CD8-positive, alpha-beta T cell (primary cell): ENCODE measurements at regions of chr3 and their contacts with region 1.

Region 1: GRCh38 chr3:71305231-71306206 is 278.0 kb downstream of the FOXP1 start:
- DNase-seq: peak in 4 of 9 experiments; percentile 19 to 48 (median 33)
- ATAC-seq: peak; percentile 29
- H3K4me3 ChIP-seq: peak overlapping the region; percentile 47 to 56
- H3K4me3 Mint-ChIP-seq: peak overlapping the region; percentile 89
- H3K27ac ChIP-seq: peak overlapping the region; percentile 57 to 80
- H3K27ac Mint-ChIP-seq: peak overlapping the region; percentile 96
- H3K4me1 ChIP-seq: peaks cover 71% of the 10 kb centered on the region
- H3K4me1 Mint-ChIP-seq: peaks cover 85% of the 10 kb centered on the region
- H3K27me3 ChIP-seq: no peaks in the 10 kb centered on the region
- H3K27me3 Mint-ChIP-seq: no peaks in the 10 kb centered on the region
- CTCF ChIP-seq: no peak

Region 2: GRCh38 chr3:70561796-70562195 is 743.7 kb before region 1 on chr3:
- CTCF ChIA-PET with region 1: no interaction called
- POLR2A ChIA-PET with region 1: no interaction called
- intact Hi-C with region 1: no loop called
- DNase-seq: no peak
- ATAC-seq: no peak
- H3K4me3 ChIP-seq: no peak overlapping the region
- H3K4me3 Mint-ChIP-seq: no peak overlapping the region
- H3K27ac ChIP-seq: no peak overlapping the region
- H3K27ac Mint-ChIP-seq: no peak overlapping the region
- H3K4me1 ChIP-seq: no peaks in the 10 kb centered on the region
- H3K4me1 Mint-ChIP-seq: no peaks in the 10 kb centered on the region
- H3K27me3 ChIP-seq: no peaks in the 10 kb centered on the region
- H3K27me3 Mint-ChIP-seq: peaks cover 3% of the 10 kb centered on the region
- CTCF ChIP-seq: no peak

Region 3: GRCh38 chr3:71006810-71007785 is 298.4 kb before region 1 on chr3:
- CTCF ChIA-PET with region 1: no interaction called
- POLR2A ChIA-PET with region 1: no interaction called
- intact Hi-C with region 1: loop called (anchors 1 to 5 kb)
- DNase-seq: peak in 2 of 9 experiments; percentile 44 to 64
- ATAC-seq: no peak
- H3K4me3 ChIP-seq: no peak overlapping the region
- H3K4me3 Mint-ChIP-seq: no peak overlapping the region
- H3K27ac ChIP-seq: no peak overlapping the region
- H3K27ac Mint-ChIP-seq: peak overlapping the region; percentile 85
- H3K4me1 ChIP-seq: peaks cover 54% of the 10 kb centered on the region
- H3K4me1 Mint-ChIP-seq: peaks cover 74% of the 10 kb centered on the region
- H3K27me3 ChIP-seq: no peaks in the 10 kb centered on the region
- H3K27me3 Mint-ChIP-seq: no peaks in the 10 kb centered on the region
- CTCF ChIP-seq: peak; percentile 30

Region 4: DNA sequence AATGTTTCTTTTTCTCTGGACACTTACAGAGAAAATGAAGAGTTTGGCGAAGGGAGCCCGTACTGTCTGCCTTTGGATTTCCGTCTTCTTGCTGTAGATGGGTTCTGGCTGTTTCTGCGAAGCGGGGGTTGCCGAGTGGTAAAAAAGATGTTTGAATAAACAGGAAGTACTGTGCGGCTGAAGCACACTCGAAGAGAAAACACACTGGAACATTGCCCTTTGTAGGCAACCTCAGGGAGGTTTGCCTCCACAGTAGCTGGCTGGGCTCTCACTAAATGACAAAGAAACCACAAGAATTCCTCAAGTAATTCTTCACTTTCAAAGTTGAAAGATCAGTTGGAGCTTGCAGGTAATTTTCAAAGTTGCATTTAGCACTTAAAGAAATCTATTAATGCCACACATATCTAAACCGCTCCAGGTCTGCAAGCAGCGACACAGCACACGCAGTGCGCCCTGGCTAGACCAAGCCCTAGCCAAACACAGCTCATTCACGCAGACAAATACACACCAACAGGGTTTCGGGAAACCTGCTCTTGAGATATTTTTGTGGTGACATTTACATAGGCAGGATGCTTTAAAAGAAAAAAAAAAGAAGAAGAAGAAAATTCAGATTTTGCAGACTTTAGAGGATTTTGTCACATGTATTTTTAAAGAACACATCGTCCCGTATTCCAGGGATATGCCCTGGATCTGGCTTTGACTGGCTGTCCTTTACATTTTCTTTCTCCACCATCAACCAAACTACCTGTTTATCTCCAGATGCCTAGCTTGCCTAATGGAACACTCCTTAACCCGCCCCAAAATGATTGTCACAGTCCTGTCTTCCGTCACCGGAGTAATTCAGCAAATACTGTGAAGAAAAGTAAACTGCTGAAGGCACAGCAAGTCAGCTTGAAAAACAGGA is 174.8 kb before region 1 on chr3:
- CTCF ChIA-PET with region 1: interaction called, 3 read pairs
- POLR2A ChIA-PET with region 1: interaction called, 3 read pairs
- intact Hi-C with region 1: loop called (anchors 2 to 5 kb)
- DNase-seq: peak; percentile 52 to 90 (median 77)
- ATAC-seq: peak; percentile 74
- H3K4me3 ChIP-seq: peak overlapping the region; percentile 56 to 57
- H3K4me3 Mint-ChIP-seq: peak overlapping the region; percentile 87
- H3K27ac ChIP-seq: peak overlapping the region; percentile 82 to 88
- H3K27ac Mint-ChIP-seq: peak overlapping the region; percentile 93
- H3K4me1 ChIP-seq: peaks cover 57% of the 10 kb centered on the region
- H3K4me1 Mint-ChIP-seq: peaks cover 80% of the 10 kb centered on the region
- H3K27me3 ChIP-seq: no peaks in the 10 kb centered on the region
- H3K27me3 Mint-ChIP-seq: no peaks in the 10 kb centered on the region
- CTCF ChIP-seq: no peak

Region 5: DNA sequence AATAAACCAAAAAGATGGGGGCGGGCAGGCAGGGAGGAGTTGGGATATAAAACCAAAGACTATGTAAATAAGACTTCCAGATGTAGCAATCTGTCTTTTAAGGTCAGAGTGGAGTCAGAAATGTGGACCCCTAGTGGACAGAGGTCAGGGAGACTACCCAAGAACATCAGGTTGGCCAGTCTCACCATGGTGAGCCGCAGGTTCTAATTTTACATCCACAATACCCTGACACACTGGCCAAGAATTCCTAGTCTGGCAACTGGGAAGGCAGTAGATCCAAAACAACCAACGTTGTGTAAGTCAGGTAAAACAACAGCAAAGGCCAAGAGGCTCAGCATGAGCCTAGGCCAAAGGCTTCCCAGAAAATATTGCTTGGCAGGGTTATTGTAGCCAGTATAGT is 74.6 kb after region 1 on chr3:
- CTCF ChIA-PET with region 1: no interaction called
- POLR2A ChIA-PET with region 1: no interaction called
- intact Hi-C with region 1: loop called in 1 of 2 experiments (anchors 5 kb)
- DNase-seq: no peak
- ATAC-seq: no peak
- H3K4me3 ChIP-seq: no peak overlapping the region
- H3K4me3 Mint-ChIP-seq: no peak overlapping the region
- H3K27ac ChIP-seq: no peak overlapping the region
- H3K27ac Mint-ChIP-seq: no peak overlapping the region
- H3K4me1 ChIP-seq: peaks cover 75% of the 10 kb centered on the region
- H3K4me1 Mint-ChIP-seq: peaks cover 84% of the 10 kb centered on the region
- H3K27me3 ChIP-seq: no peaks in the 10 kb centered on the region
- H3K27me3 Mint-ChIP-seq: no peaks in the 10 kb centered on the region
- CTCF ChIP-seq: no peak

Region 6: GRCh38 chr3:71495708-71496472 is 190.4 kb after region 1 on chr3:
- CTCF ChIA-PET with region 1: interaction called, 3 read pairs
- POLR2A ChIA-PET with region 1: interaction called, 5 read pairs
- intact Hi-C with region 1: loop called (anchors 2 to 5 kb)
- DNase-seq: peak in 2 of 9 experiments; percentile 48 to 69
- ATAC-seq: no peak
- H3K4me3 ChIP-seq: peak overlapping the region; percentile 38 to 39
- H3K4me3 Mint-ChIP-seq: peak overlapping the region; percentile 76
- H3K27ac ChIP-seq: peak overlapping the region; percentile 46 to 80
- H3K27ac Mint-ChIP-seq: peak overlapping the region; percentile 94
- H3K4me1 ChIP-seq: peaks cover 65% of the 10 kb centered on the region
- H3K4me1 Mint-ChIP-seq: peaks cover 83% of the 10 kb centered on the region
- H3K27me3 ChIP-seq: no peaks in the 10 kb centered on the region
- H3K27me3 Mint-ChIP-seq: no peaks in the 10 kb centered on the region
- CTCF ChIP-seq: no peak